Sigmoid colon (tissue), 7 donors: ENCODE measurements at regions of chr4 and their contacts with region 1.

Region 1: GRCh38 chr4:158139086-158139485 is 33.7 kb downstream of the GASK1B start:
- DNase-seq: no peak
- H3K4me3 ChIP-seq: peak overlapping the region in 2 of 4 donors; percentile 19 to 25
- H3K27ac ChIP-seq: peak overlapping the region in 3 of 4 donors; percentile 3 to 54 (median 17)
- H3K4me1 ChIP-seq: peaks cover 0 to 29% (median 11%) of the 10 kb centered on the region in 4 donors
- H3K27me3 ChIP-seq: no peaks in the 10 kb centered on the region
- CTCF ChIP-seq: no peak
- EP300 ChIP-seq: no peak
- POLR2A ChIP-seq: no peak

Region 2: GRCh38 chr4:158155656-158156356 is 16.7 kb after region 1 on chr4:
- intact Hi-C with region 1: loop called (anchors 2 kb)
- DNase-seq: no peak
- H3K4me3 ChIP-seq: no peak overlapping the region
- H3K27ac ChIP-seq: peak overlapping the region in 2 of 4 donors; percentile 21 to 92
- H3K4me1 ChIP-seq: peaks cover 5 to 53% (median 51%) of the 10 kb centered on the region in 4 donors
- H3K27me3 ChIP-seq: no peaks in the 10 kb centered on the region
- CTCF ChIP-seq: no peak
- EP300 ChIP-seq: no peak
- POLR2A ChIP-seq: no peak

Region 3: GRCh38 chr4:158295053-158295452 is 156.0 kb after region 1 on chr4:
- intact Hi-C with region 1: no loop called
- DNase-seq: no peak
- H3K4me3 ChIP-seq: no peak overlapping the region
- H3K27ac ChIP-seq: no peak overlapping the region
- H3K4me1 ChIP-seq: peaks cover 0 to 6% (median 0%) of the 10 kb centered on the region in 4 donors
- H3K27me3 ChIP-seq: no peaks in the 10 kb centered on the region
- CTCF ChIP-seq: no peak
- EP300 ChIP-seq: no peak
- POLR2A ChIP-seq: no peak

Region 4: GRCh38 chr4:158371158-158371557 is 232.1 kb after region 1 on chr4:
- intact Hi-C with region 1: no loop called
- DNase-seq: no peak
- H3K4me3 ChIP-seq: no peak overlapping the region
- H3K27ac ChIP-seq: no peak overlapping the region
- H3K4me1 ChIP-seq: peaks cover 0 to 4% (median 0%) of the 10 kb centered on the region in 4 donors
- H3K27me3 ChIP-seq: no peaks in the 10 kb centered on the region
- CTCF ChIP-seq: no peak
- EP300 ChIP-seq: no peak
- POLR2A ChIP-seq: no peak